Aorta (tissue), 5 donors: ENCODE measurements at regions of chr13 and their contacts with region 1.

Region 1: GRCh38 chr13:32205431-32206096 is 109.6 kb downstream of the ZAR1L start:
- DNase-seq: no peak
- ATAC-seq: no peak
- H3K4me3 ChIP-seq: no peak overlapping the region
- H3K27ac ChIP-seq: no peak overlapping the region
- H3K4me1 ChIP-seq: peaks cover 0 to 2% of the 10 kb centered on the region in 2 donors
- H3K27me3 ChIP-seq: no peaks in the 10 kb centered on the region

Region 2: GRCh38 chr13:32142956-32143375 is 62.6 kb before region 1 on chr13:
- intact Hi-C with region 1: no loop called
- DNase-seq: no peak
- ATAC-seq: no peak
- H3K4me3 ChIP-seq: no peak overlapping the region
- H3K27ac ChIP-seq: no peak overlapping the region
- H3K4me1 ChIP-seq: peaks cover 1 to 3% of the 10 kb centered on the region in 2 donors
- H3K27me3 ChIP-seq: no peaks in the 10 kb centered on the region

Region 3: DNA sequence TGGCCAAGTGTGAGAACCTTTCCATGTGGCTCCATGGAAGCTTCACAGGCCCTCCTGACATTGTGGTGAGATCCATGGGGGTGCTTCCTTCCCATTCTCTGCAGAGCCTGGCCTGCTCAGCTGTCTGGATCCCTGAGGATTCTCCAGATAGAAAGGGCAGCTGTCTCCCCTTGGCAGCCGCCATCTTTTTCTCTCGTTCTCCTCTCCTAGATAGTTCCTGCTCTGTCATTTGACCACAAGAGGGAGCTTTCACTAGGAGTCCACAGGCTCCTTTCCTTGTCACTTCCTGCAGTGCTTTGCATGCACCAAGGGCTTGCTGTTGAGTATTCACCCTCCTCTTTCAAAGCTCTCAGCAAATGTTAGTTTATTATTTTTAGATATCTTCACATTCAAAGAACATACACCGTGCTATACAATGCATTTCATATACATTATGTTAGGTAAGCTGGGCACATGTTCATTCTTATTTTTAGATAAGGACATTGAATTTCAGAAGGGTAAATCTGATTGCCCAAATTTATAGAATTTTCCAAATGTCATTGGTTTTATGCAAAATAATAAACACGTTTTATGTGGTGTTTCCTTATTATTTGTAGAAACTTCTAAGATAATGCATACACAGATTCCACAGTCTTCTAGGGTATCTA is 40.8 kb before region 1 on chr13:
- intact Hi-C with region 1: loop called in 1 of 2 experiments (anchors 5 kb)
- DNase-seq: no peak
- ATAC-seq: peak; percentile 61
- H3K4me3 ChIP-seq: no peak overlapping the region
- H3K27ac ChIP-seq: peak overlapping the region in 1 of 2 donors; percentile 84
- H3K4me1 ChIP-seq: peaks cover 0 to 5% of the 10 kb centered on the region in 2 donors
- H3K27me3 ChIP-seq: no peaks in the 10 kb centered on the region